ENCODE measurements at regions of chr11 and their contacts with region 1.

Region 1: GRCh38 chr11:73141848-73142286 is 251 bp downstream of the FCHSD2 start:
- DNase-seq: peak in 4 of 9 donors; percentile 38 to 64 (median 50)
- ATAC-seq: peak; percentile 42
- H3K4me3 ChIP-seq: peak overlapping the region; percentile 87
- H3K4me3 Mint-ChIP-seq: peak overlapping the region; percentile 83 to 97 (median 94)
- H3K27ac ChIP-seq: peak overlapping the region; percentile 99
- H3K27ac Mint-ChIP-seq: peak overlapping the region; percentile 82 to 98 (median 91)
- H3K4me1 ChIP-seq: peaks cover 25 to 26% of the 10 kb centered on the region in 2 donors
- H3K4me1 Mint-ChIP-seq: peaks cover 22 to 58% (median 51%) of the 10 kb centered on the region in 7 donors
- H3K27me3 ChIP-seq: no peaks in the 10 kb centered on the region
- H3K27me3 Mint-ChIP-seq: no peaks in the 10 kb centered on the region

Region 2: DNA sequence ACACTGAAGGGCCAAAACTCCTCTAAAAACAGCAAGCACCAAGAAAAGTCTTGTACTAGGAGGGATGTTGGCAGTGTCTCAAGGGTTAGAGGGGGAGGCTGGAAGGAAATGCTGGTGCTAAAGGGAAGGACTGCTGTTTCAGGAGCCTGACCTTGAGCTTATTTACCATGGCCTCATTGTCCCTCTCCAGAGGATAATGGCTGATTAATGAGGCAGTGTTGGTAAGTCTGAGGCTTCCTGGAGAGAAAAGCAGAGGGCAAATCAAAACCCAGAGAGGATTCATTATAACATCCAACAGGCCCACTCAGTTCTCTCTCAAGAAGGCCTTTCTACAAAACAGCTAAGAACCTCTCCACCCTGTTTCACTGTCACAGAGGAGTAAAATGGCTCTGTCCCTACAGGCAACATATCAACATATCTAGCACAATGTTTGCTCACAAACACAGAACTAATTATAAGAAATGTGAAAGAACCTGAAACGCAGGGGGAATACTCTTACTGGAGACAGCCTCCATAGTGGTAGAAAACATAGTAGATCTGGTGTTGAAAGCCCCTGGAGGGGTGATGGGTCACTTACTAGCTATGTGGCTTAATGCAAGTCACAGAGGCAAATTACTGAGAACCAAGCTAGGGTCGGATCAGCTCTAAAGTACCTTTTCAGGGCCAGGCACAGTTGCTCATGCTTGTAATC is 1093.0 kb before region 1 on chr11:
- CTCF ChIA-PET with region 1: no interaction called
- POLR2A ChIA-PET with region 1: no interaction called
- intact Hi-C with region 1: no loop called
- DNase-seq: no peak
- ATAC-seq: no peak
- H3K4me3 ChIP-seq: no peak overlapping the region
- H3K4me3 Mint-ChIP-seq: no peak overlapping the region
- H3K27ac ChIP-seq: no peak overlapping the region
- H3K27ac Mint-ChIP-seq: peak overlapping the region in 2 of 9 donors; percentile 76 to 84
- H3K4me1 ChIP-seq: peaks cover 0 to 6% of the 10 kb centered on the region in 2 donors
- H3K4me1 Mint-ChIP-seq: peaks cover 2 to 23% (median 15%) of the 10 kb centered on the region in 7 donors
- H3K27me3 ChIP-seq: no peaks in the 10 kb centered on the region
- H3K27me3 Mint-ChIP-seq: no peaks in the 10 kb centered on the region

Region 3: DNA sequence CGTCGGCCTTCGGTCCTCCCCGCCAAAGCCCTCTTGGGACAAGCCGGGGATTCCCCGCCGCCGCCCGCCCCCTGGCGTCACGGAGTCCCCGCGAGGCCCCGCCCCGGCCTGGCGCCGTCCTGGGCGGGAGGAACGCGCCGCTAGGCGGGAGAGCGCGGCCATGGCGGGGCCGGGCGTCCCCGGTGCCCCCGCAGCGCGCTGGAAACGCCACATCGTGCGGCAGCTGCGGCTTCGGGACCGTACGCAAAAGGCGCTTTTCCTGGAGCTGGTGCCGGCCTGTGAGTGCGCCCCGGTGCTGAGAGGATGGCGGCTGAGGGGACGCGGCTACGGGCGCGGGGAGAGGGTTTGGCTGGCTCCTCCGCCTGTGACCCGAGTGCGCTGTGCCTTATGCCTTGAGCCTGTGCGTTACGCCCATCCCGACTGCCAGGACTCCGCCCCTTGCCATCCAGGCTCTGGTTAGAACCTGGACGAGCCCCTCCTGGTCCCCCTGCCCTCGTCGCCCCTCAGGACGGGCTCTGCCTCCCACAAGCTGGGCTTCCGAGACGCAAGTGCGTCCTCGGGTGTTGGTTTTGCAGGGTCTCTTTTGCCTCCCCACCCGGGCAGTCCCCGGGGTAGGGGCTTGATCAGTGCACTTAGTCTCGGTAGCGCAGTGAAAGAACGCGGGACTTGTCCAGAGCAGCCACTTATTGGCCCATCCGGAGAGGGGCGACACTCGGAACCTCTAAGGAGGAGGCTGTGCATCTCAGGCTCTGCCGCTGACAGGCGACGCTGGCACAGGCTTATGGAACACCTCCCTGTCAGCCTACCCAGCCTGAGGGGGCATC is 327.4 kb before region 1 on chr11 and contains the start of gene ATG16L2:
- CTCF ChIA-PET with region 1: no interaction called
- POLR2A ChIA-PET with region 1: interaction called, 4 read pairs
- intact Hi-C with region 1: loop called (anchors 1 kb)
- DNase-seq: peak in 8 of 9 donors; percentile 53 to 96 (median 92)
- ATAC-seq: peak; percentile 89
- H3K4me3 ChIP-seq: peak within 1 kb of the TSS; percentile 89
- H3K4me3 Mint-ChIP-seq: peak within 1 kb of the TSS; percentile 97 to 99 (median 98)
- H3K27ac ChIP-seq: peak within 1 kb of the TSS; percentile 100
- H3K27ac Mint-ChIP-seq: peak within 1 kb of the TSS; percentile 86 to 99 (median 98)
- H3K4me1 ChIP-seq: peaks cover 18 to 23% of the 10 kb centered on the region in 2 donors
- H3K4me1 Mint-ChIP-seq: peaks cover 31 to 67% (median 52%) of the 10 kb centered on the region in 7 donors
- H3K27me3 ChIP-seq: no peaks in the 10 kb centered on the region
- H3K27me3 Mint-ChIP-seq: no peaks in the 10 kb centered on the region
- total RNA-seq, gene ATG16L2: 99.5 to 199 (median 166) TPM

Region 4: GRCh38 chr11:72924568-72925190 is 217.2 kb before region 1 on chr11:
- CTCF ChIA-PET with region 1: interaction called, 4 read pairs
- POLR2A ChIA-PET with region 1: interaction called, 7 read pairs
- intact Hi-C with region 1: loop called (anchors 1 to 5 kb)
- DNase-seq: peak in 5 of 9 donors; percentile 18 to 49 (median 41)
- ATAC-seq: peak; percentile 61
- H3K4me3 ChIP-seq: no peak overlapping the region
- H3K4me3 Mint-ChIP-seq: no peak overlapping the region
- H3K27ac ChIP-seq: no peak overlapping the region
- H3K27ac Mint-ChIP-seq: peak overlapping the region in 5 of 9 donors; percentile 20 to 65 (median 34)
- H3K4me1 ChIP-seq: no peaks in the 10 kb centered on the region
- H3K4me1 Mint-ChIP-seq: peaks cover 4 to 18% (median 12%) of the 10 kb centered on the region in 7 donors
- H3K27me3 ChIP-seq: no peaks in the 10 kb centered on the region
- H3K27me3 Mint-ChIP-seq: no peaks in the 10 kb centered on the region

Region 5: DNA sequence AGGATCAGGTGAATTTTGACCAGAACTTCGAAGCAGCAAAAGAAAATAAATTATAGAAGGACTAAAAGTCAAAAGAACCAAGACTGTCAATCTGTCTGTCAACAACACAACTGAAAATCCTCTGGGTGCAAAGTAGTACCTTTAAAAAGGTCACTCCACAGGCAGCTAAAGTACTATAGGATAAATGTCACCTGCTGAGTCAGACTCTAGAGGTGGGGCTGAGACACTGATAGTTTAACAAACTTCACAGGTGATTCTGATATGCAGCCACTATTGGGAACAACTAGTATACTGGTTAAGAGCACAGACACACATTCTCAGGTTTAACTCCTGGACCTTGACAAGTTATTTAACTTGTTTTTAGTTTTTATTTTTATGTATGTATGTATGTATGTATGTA is 107.1 kb before region 1 on chr11:
- CTCF ChIA-PET with region 1: no interaction called
- POLR2A ChIA-PET with region 1: interaction called, 4 read pairs
- intact Hi-C with region 1: loop called (anchors 1 to 2 kb)
- DNase-seq: no peak
- ATAC-seq: peak; percentile 31
- H3K4me3 ChIP-seq: peak overlapping the region; percentile 22
- H3K4me3 Mint-ChIP-seq: peak overlapping the region; percentile 17 to 83 (median 72)
- H3K27ac ChIP-seq: no peak overlapping the region
- H3K27ac Mint-ChIP-seq: peak overlapping the region; percentile 61 to 90 (median 78)
- H3K4me1 ChIP-seq: peaks cover 8 to 20% of the 10 kb centered on the region in 2 donors
- H3K4me1 Mint-ChIP-seq: peaks cover 23 to 70% (median 57%) of the 10 kb centered on the region in 7 donors
- H3K27me3 ChIP-seq: no peaks in the 10 kb centered on the region
- H3K27me3 Mint-ChIP-seq: no peaks in the 10 kb centered on the region

Region 6: DNA sequence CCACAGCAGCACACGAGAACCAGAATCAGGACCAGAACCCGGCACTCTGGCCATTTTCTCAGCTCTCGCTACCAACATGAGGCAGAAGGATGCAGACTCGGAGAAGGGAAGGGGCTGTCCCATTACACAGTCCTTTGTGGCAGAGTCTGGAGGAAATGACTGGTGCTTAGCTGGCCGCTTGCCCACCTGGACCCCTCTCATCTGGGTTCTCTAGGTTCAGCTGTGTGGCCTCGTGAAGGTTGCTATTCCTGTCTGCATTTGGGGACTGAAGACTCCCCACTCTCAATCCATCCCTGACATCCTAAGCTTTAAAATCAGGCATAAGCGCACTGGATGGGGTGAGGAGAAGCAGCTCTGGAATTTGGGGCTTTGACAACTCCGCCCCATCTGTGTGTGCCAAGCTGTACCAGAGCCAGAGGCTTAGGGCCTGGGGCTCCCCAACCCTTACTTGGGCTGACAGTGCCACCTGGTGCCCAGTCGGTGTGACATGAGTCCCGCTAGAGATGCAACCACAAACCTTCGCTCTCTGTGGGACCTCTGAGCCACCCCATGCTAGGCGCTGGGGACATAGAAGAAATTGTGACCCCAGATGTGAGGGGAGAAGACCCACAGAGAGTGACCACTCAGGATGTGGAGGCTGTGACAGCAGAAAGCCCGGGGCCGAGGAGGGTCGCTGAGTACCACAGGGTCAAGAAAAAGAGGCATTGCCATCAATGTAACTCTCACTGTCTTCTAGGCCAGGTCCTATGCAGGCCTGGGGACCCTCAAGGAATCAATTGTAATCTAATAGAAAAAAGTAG is 36.1 kb after region 1 on chr11:
- CTCF ChIA-PET with region 1: interaction called, 22 read pairs
- POLR2A ChIA-PET with region 1: interaction called, 5 read pairs
- intact Hi-C with region 1: loop called (anchors 1 kb)
- DNase-seq: peak; percentile 56 to 80 (median 76)
- ATAC-seq: peak; percentile 98
- H3K4me3 ChIP-seq: no peak overlapping the region
- H3K4me3 Mint-ChIP-seq: no peak overlapping the region
- H3K27ac ChIP-seq: no peak overlapping the region
- H3K27ac Mint-ChIP-seq: peak overlapping the region in 2 of 9 donors; percentile 14 to 42
- H3K4me1 ChIP-seq: no peaks in the 10 kb centered on the region
- H3K4me1 Mint-ChIP-seq: peaks cover 4 to 26% (median 9%) of the 10 kb centered on the region in 7 donors
- H3K27me3 ChIP-seq: peaks cover 0 to 2% of the 10 kb centered on the region in 2 donors
- H3K27me3 Mint-ChIP-seq: peaks cover 0 to 27% (median 0%) of the 10 kb centered on the region in 5 donors

Region 7: GRCh38 chr11:73779084-73779902 is 637.4 kb after region 1 on chr11:
- CTCF ChIA-PET with region 1: no interaction called
- POLR2A ChIA-PET with region 1: no interaction called
- intact Hi-C with region 1: loop called (anchors 5 kb)
- DNase-seq: peak; percentile 88 to 98 (median 97)
- ATAC-seq: peak; percentile 99
- H3K4me3 ChIP-seq: peak overlapping the region; percentile 58
- H3K4me3 Mint-ChIP-seq: peak overlapping the region; percentile 86 to 97 (median 94)
- H3K27ac ChIP-seq: peak overlapping the region; percentile 89
- H3K27ac Mint-ChIP-seq: peak overlapping the region; percentile 94 to 100 (median 100)
- H3K4me1 ChIP-seq: peaks cover 0 to 6% of the 10 kb centered on the region in 2 donors
- H3K4me1 Mint-ChIP-seq: peaks cover 2 to 18% (median 9%) of the 10 kb centered on the region in 7 donors
- H3K27me3 ChIP-seq: no peaks in the 10 kb centered on the region
- H3K27me3 Mint-ChIP-seq: peaks cover 0 to 6% (median 0%) of the 10 kb centered on the region in 5 donors

Region 8: GRCh38 chr11:74948898-74949747 is 1807.3 kb after region 1 on chr11 and contains the starts of genes SPCS2 and XRRA1:
- CTCF ChIA-PET with region 1: no interaction called
- POLR2A ChIA-PET with region 1: no interaction called
- intact Hi-C with region 1: loop called in 1 of 2 experiments (anchors 5 kb)
- DNase-seq: peak; percentile 87 to 98 (median 97)
- ATAC-seq: peak; percentile 99
- H3K4me3 ChIP-seq: peak within 1 kb of the TSS; percentile 99
- H3K4me3 Mint-ChIP-seq: peak within 1 kb of the TSS; percentile 95 to 99 (median 96)
- H3K27ac ChIP-seq: peak within 1 kb of the TSS; percentile 78
- H3K27ac Mint-ChIP-seq: peak within 1 kb of the TSS; percentile 85 to 99 (median 96)
- H3K4me1 ChIP-seq: peaks cover 16 to 21% of the 10 kb centered on the region in 2 donors
- H3K4me1 Mint-ChIP-seq: peaks cover 30 to 86% (median 55%) of the 10 kb centered on the region in 7 donors
- H3K27me3 ChIP-seq: no peaks in the 10 kb centered on the region
- H3K27me3 Mint-ChIP-seq: no peaks in the 10 kb centered on the region
- total RNA-seq, gene SPCS2: 53.9 to 211 (median 87.5) TPM
- total RNA-seq, gene XRRA1: 11.3 to 20.8 (median 20.3) TPM

Measured in naive thymus-derived CD4-positive, alpha-beta T cell (primary cell).